ENCODE measurements at regions of chr19 and their contacts with region 1.

Region 1: GRCh38 chr19:36014029-36014924 is at the start of gene ALKBH6:
- DNase-seq: peak; percentile 100
- H3K4me3 Mint-ChIP-seq: peak within 1 kb of the TSS; percentile 97
- H3K27ac Mint-ChIP-seq: peak within 1 kb of the TSS; percentile 94
- H3K4me1 Mint-ChIP-seq: peaks cover 27% of the 10 kb centered on the region
- H3K27me3 Mint-ChIP-seq: no peaks in the 10 kb centered on the region
- total RNA-seq, gene ALKBH6: 36.9 to 37.8 TPM

Region 2: DNA sequence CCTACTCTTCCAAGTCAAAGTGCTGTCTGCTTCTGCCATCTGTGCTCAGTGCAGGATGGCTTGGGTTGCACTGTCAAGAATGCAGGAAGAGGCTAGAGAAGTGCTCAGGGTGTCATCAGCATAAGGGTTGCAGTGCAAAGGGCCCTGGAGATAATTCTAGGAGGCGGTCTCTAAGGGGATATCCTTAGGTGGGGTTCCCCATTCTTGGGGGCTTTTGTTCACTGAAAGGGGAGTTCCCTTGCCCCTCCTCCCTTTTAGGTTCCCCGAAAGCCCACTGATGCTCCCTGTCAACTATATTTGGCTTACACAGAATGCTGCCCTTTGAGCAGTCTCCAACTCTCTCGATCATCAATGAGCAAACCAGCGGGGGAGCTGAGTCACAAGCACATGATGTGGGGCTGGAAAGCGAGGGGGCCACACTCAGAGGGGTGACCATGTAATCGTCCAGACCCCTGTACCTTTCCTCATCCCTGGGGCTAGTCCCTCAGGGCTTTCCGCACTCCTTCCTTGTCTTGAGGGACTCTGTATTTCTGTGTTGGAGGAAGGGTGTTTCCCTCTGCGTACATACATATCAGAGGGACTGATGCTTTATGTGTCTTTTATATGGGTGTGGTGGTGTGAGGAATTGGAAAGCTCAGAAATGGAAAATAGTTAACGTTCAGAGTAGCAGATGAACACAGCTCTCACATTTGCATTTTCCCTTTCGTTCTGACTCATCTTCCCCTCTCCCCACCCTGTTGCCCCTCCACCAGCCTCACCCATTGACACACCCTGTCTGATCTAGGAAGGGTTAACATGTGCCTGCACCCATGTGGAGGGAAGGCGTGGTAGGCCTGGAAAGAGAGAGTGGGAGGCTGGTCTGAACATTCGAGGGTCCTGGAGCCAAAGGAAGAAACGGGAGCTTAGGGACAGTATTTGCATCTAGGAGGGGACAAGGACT is 303.2 kb before region 1 on chr19:
- CTCF ChIA-PET with region 1: no interaction called
- intact Hi-C with region 1: loop called (anchors 1 kb)
- DNase-seq: peak; percentile 87
- H3K4me3 Mint-ChIP-seq: peak overlapping the region; percentile 52
- H3K27ac Mint-ChIP-seq: peak overlapping the region; percentile 100
- H3K4me1 Mint-ChIP-seq: peaks cover 44% of the 10 kb centered on the region
- H3K27me3 Mint-ChIP-seq: no peaks in the 10 kb centered on the region

Region 3: GRCh38 chr19:35748106-35749020 is 265.9 kb before region 1 on chr19 and contains the start of gene LIN37:
- CTCF ChIA-PET with region 1: no interaction called
- intact Hi-C with region 1: loop called (anchors 1 kb)
- DNase-seq: peak; percentile 100
- H3K4me3 Mint-ChIP-seq: peak within 1 kb of the TSS; percentile 98
- H3K27ac Mint-ChIP-seq: peak within 1 kb of the TSS; percentile 92
- H3K4me1 Mint-ChIP-seq: peaks cover 44% of the 10 kb centered on the region
- H3K27me3 Mint-ChIP-seq: no peaks in the 10 kb centered on the region
- total RNA-seq, gene LIN37: 5.7 to 9.7 TPM

Region 4: GRCh38 chr19:35882114-35882832 is 132.0 kb before region 1 on chr19:
- CTCF ChIA-PET with region 1: no interaction called
- intact Hi-C with region 1: no loop called
- DNase-seq: peak; percentile 58
- H3K4me3 Mint-ChIP-seq: no peak overlapping the region
- H3K27ac Mint-ChIP-seq: no peak overlapping the region
- H3K4me1 Mint-ChIP-seq: peaks cover 9% of the 10 kb centered on the region
- H3K27me3 Mint-ChIP-seq: peaks cover 21% of the 10 kb centered on the region

Region 5: GRCh38 chr19:35977446-35978222 is 36.6 kb before region 1 on chr19:
- CTCF ChIA-PET with region 1: no interaction called
- intact Hi-C with region 1: no loop called
- DNase-seq: peak; percentile 28
- H3K4me3 Mint-ChIP-seq: no peak overlapping the region
- H3K27ac Mint-ChIP-seq: no peak overlapping the region
- H3K4me1 Mint-ChIP-seq: no peaks in the 10 kb centered on the region
- H3K27me3 Mint-ChIP-seq: peaks cover 9% of the 10 kb centered on the region

Region 6: DNA sequence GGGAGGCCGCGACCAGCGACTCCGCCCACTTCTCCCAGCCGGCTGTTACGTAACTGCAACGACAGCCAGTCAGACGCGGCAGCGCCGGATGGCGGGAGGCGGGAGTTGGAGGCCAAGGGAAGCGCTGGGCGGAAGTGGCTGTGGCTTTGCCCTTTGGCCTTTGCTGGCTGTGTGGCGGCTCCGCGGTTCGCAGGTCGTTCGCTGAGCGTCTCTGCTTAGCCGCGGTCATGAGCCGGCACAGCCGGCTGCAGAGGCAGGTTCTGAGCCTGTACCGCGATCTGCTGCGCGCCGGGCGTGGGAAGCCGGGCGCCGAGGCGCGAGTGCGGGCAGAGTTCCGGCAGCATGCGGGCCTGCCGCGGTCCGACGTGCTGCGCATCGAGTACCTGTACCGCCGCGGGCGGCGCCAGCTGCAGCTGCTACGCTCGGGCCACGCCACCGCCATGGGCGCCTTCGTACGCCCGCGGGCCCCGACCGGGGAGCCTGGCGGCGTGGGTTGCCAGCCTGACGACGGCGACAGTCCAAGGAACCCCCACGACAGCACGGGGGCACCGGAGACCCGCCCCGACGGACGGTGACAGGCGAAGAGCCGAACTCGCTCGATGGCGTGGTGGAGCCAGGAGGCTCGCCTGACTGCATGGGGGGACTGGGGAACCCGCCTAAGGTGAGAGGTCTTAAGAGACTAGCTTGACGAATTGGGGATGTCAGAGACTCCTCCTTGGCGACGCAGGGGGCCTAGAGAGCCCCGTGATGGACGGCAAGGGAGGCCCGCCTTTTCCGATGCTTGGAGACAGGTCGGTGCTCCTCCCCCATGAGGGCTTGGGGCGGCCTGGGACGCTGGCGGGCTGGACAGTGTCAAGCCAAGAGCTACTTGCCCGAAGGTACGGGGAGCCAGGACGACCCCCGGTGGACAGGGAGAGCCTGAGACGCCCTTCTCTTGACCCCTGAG is 19.0 kb before region 1 on chr19 and contains the start of gene SDHAF1:
- CTCF ChIA-PET with region 1: interaction called, 5 read pairs
- intact Hi-C with region 1: loop called (anchors 1 kb)
- DNase-seq: peak; percentile 97
- H3K4me3 Mint-ChIP-seq: peak within 1 kb of the TSS; percentile 97
- H3K27ac Mint-ChIP-seq: peak within 1 kb of the TSS; percentile 89
- H3K4me1 Mint-ChIP-seq: peaks cover 37% of the 10 kb centered on the region
- H3K27me3 Mint-ChIP-seq: no peaks in the 10 kb centered on the region
- total RNA-seq, gene SDHAF1: 13.1 to 13.8 TPM

Region 7: GRCh38 chr19:36114763-36115452 is 100.6 kb after region 1 on chr19 and contains the start of gene POLR2I:
- CTCF ChIA-PET with region 1: no interaction called
- intact Hi-C with region 1: loop called (anchors 1 kb)
- DNase-seq: peak; percentile 99
- H3K4me3 Mint-ChIP-seq: peak within 1 kb of the TSS; percentile 99
- H3K27ac Mint-ChIP-seq: peak within 1 kb of the TSS; percentile 91
- H3K4me1 Mint-ChIP-seq: peaks cover 31% of the 10 kb centered on the region
- H3K27me3 Mint-ChIP-seq: no peaks in the 10 kb centered on the region
- total RNA-seq, gene POLR2I: 86.8 to 87.4 TPM